Mucosa of descending colon (tissue), 3 donors: ENCODE measurements at regions of chr6 and their contacts with region 1.

Region 1: DNA sequence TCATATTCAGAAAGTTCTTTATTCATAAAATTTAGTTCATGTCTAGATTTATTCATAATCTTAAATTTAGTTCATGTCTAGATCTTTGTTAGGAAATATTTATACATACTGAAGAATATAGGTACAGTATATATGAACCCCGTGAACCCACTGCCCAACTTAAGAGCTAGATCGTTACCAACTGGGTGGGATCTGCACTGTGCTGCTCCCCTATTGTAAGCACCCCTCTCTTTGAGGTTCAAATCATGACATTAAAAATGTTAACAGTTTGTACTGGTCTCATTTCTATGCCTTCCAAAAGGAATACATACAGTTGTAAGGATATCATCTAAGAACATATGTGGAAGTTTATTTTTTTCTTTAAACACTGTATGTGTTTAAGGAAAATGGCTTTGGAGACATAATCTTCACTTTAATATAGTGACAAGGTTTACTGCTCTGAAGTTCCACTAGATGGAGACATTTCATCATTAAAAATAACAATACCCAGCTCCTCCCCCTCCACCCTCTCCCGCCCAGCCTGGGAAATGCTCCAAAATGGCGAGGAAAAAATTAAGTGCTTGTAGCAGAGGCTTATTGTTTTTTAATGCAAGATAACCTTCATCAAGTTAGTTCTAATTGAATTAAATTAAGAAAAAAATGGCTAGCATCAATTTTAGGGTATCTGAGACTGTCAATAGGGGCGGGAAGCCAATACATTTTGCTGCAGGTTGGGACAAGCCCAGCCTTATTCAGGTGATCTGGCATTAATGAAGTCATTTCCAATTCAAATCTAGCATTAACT is 104.1 kb upstream of the TRAF3IP2 start:
- DNase-seq: peak in 2 of 3 donors; percentile 56 to 71
- ATAC-seq: peak; percentile 81
- H3K4me3 ChIP-seq: no peak overlapping the region
- H3K4me1 ChIP-seq: peaks cover 25% of the 10 kb centered on the region
- CTCF ChIP-seq: peak; percentile 27

Region 2: DNA sequence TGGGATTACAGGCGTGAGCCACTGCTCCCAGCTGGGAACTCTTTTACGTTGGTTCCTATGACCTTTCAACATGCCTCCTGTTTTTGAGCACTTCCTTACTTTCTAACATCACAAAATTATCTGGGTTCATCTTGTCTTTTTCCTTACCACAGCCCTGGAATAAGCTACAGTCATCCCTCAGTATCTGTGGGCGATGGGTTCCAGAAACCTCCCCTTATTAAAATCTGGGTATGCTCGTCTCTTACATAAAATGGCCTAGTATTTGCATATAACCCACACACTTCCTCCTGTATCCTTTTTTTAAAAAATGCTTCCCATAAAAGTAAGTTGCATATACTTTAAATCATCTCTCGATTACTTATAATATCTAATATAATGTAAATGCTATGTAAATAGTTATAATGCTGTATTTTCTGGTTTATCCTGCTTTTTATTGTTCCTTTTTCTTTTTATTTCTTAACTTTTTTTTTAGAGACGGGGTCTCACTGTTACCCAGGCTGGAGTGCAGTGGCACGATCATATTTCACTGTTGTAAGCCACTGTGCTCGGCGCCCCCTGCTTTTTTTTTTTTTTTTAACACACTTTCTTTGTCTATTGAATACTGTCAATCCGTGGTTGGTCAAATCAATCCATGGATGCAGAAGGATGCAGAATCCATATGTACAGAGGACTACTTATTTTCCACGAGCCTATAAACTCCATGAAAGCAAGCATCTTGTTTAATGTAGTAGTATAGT is 718.8 kb before region 1 on chr6:
- intact Hi-C with region 1: no loop called
- DNase-seq: no peak
- ATAC-seq: no peak
- H3K4me3 ChIP-seq: no peak overlapping the region
- H3K4me1 ChIP-seq: no peaks in the 10 kb centered on the region
- CTCF ChIP-seq: no peak

Region 3: GRCh38 chr6:111483736-111484632 is 225.8 kb before region 1 on chr6:
- intact Hi-C with region 1: no loop called
- DNase-seq: peak; percentile 89 to 96 (median 92)
- ATAC-seq: peak; percentile 89
- H3K4me3 ChIP-seq: peak overlapping the region; percentile 87
- H3K4me1 ChIP-seq: peaks cover 11% of the 10 kb centered on the region
- CTCF ChIP-seq: no peak

Region 4: DNA sequence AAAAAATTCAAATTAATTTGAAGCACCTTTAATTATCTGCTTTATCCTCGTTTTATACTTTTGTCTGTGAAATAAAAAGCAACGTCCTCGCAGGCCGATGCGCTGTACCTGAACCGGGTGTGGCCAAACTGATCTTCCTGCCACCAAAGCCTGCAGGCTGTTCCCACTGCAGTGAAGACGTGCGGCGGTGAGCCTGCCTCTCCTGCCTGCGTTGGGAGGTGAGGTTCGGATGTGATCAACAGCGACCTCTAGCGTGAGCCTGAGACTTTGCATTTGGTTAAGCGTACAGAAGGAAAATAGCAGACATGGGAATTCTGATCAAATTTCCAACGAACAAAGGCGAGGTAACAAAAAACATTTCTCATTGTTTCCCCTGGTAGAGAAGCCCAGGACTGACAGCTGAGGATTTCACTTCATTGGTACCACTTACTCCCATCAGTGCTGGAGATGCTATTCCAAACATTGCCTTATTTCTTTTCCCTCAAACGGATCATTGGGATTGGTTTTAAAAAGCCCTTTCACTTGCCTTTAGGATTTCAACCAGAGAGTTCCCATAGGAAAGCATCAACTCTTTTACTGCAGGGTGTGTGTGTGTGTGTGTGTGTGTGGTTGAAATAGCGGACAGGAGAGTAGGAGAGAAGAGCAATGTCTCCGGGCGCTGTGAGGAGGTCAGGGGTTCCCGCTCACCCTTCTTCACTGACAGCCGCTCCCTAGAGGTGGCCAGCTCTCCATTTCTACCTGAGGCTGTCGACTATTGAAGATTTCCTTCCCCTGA is 287.5 kb after region 1 on chr6:
- intact Hi-C with region 1: loop called (anchors 2 to 5 kb)
- DNase-seq: peak; percentile 71 to 85 (median 79)
- ATAC-seq: peak; percentile 95
- H3K4me3 ChIP-seq: no peak overlapping the region
- H3K4me1 ChIP-seq: no peaks in the 10 kb centered on the region
- CTCF ChIP-seq: peak; percentile 78

Region 5: DNA sequence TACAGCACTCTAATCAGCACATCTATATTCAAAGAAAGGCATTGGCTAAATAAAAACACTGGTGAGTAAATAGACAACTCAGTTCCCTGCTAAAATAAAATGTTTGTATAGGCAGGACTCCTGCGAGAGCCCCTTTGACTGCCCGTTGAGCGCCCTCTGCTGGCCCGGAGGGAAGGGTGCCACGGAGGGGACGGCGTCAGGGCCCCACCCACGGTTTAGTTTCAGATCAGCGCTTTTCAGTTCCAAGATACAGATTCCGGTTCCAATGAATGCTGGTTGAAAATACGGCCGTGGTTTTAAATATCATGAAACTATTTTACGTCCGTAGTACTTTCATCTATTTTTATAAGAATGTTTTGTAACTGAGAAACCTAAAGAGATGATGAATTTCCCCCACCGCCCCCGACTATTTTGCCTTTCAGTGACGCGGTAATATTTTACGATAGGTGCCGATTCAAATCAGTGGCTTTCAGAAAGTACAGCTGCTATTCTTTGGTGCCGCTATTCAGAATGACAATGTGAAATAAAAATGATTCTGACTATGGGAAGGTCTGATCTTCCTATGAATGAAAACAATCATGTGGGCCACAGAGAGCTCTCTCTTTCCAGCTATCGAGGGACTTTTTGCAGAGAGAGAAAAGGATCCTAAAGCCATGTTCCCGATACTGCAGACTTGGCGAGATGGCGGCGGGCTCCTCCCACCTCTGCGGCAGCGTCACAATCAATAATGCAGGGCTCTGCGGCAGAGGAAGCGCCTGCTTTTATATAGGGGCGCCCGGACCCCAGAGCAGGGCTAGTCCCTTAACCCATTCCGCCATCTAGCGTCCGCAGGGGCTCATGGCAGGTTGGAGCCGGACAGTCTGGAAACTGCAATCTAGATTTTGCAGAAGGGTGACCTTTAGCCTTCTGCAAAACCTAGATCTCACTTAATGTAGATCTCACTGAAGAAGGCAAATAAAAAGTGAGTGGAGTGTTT is 333.5 kb after region 1 on chr6:
- intact Hi-C with region 1: loop called (anchors 2 to 5 kb)
- DNase-seq: peak; percentile 90 to 92 (median 91)
- ATAC-seq: peak; percentile 97
- H3K4me3 ChIP-seq: peak overlapping the region; percentile 31
- H3K4me1 ChIP-seq: no peaks in the 10 kb centered on the region
- CTCF ChIP-seq: peak; percentile 99